ENCODE measurements at regions of chr14 and their contacts with region 1.

Region 1: DNA sequence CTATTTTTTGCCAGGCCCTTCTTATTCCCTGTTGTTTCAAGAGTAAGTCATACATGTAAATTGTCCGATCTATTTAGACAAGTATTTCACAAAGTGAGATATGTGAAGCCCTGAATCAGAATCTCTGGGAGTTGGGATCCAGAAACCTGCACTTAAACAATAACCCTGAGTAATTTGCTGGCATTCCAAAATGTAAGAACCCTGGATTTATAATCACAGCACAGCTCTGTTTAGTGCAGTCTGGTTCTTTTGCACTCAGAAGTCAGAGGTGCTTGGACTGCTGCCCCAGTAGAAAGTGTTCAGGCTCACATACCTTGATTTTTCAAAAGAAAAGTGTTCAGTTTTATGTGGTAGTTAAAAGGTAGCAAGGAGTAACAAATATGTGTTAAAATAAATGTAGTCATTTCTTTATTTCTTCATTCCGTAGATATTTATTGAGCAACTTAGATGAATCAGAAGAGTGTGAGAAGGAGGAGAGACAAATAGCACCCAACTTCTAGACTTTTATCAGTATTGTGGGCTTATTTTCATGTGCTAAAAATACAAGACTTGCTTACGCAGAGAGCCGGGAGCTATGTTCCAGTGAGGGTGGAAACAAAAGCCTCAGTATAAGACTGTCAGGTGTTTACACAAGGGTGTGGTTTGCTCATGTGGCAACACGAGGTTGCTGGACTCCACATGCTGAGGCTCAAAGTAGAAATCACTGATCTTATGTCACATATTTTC is 70.1 kb downstream of the SYNE2 start:
- DNase-seq: no peak
- ATAC-seq: peak; percentile 61
- H3K4me3 ChIP-seq: no peak overlapping the region
- H3K27ac ChIP-seq: no peak overlapping the region
- H3K4me1 ChIP-seq: no peaks in the 10 kb centered on the region
- H3K27me3 ChIP-seq: no peaks in the 10 kb centered on the region
- CTCF ChIP-seq: no peak
- EP300 ChIP-seq: no peak
- POLR2A ChIP-seq: no peak
- RAD21 ChIP-seq: no peak

Region 2: GRCh38 chr14:63901434-63902085 is 21.3 kb before region 1 on chr14:
- CTCF ChIA-PET with region 1: no interaction called
- POLR2A ChIA-PET with region 1: no interaction called
- RAD21 ChIA-PET with region 1: no interaction called
- SMC1A ChIA-PET with region 1: interaction called, 10 read pairs
- in situ Hi-C with region 1: no loop called
- intact Hi-C with region 1: no loop called
- DNase-seq: no peak
- ATAC-seq: no peak
- H3K4me3 ChIP-seq: no peak overlapping the region
- H3K27ac ChIP-seq: no peak overlapping the region
- H3K4me1 ChIP-seq: 0 out of 2 replicates have a peak, but pooled peaks cover 4% of the 10 kb centered on the region
- H3K27me3 ChIP-seq: no peaks in the 10 kb centered on the region
- CTCF ChIP-seq: no peak
- EP300 ChIP-seq: no peak
- POLR2A ChIP-seq: no peak
- RAD21 ChIP-seq: no peak

Region 3: DNA sequence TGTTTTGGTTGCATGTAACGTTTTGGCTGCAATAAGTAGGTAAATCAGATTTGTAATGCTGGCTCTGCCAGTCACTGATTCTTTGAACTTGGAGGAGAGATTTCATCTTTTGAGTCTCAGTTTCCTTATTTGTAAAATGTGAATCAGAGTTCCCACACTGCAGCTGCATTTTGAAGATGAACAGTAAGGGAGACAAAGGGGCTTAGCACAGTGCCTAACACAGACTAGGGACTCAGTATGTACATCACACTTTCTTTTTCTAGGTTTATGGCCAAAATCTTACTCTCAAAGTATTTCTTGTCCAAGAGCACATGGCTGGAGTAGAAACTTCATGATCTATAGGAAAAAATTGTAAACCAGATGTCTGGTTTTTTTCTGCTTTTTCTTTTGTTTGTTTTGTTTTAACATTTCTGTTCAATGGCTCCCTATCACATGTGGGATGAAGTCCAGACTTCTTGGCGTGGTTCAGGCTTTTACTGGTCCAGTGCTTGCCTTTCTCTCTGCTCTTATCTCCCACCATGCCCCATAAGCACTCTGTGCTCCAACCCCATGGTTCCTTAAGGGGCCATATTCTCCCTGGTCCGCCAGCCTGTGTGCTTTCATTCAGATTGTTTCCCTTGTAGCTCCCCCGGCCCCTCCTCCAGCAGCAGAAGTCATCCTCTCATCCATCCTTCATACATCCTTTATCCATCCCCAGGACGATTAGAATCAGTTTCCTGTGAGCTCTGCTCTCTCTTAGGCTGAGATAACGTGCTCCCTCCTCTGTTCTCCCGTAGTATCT is 12.1 kb before region 1 on chr14:
- CTCF ChIA-PET with region 1: interaction called, 9 read pairs
- POLR2A ChIA-PET with region 1: no interaction called
- RAD21 ChIA-PET with region 1: interaction called, 3 read pairs
- SMC1A ChIA-PET with region 1: interaction called, 13 read pairs
- in situ Hi-C with region 1: no loop called
- intact Hi-C with region 1: no loop called
- DNase-seq: no peak
- ATAC-seq: peak; percentile 53
- H3K4me3 ChIP-seq: no peak overlapping the region
- H3K27ac ChIP-seq: peak overlapping the region; percentile 56
- H3K4me1 ChIP-seq: peaks cover 17% of the 10 kb centered on the region
- H3K27me3 ChIP-seq: no peaks in the 10 kb centered on the region
- CTCF ChIP-seq: no peak
- EP300 ChIP-seq: no peak
- POLR2A ChIP-seq: no peak
- RAD21 ChIP-seq: no peak